ENCODE measurements at regions of chr2 and their contacts with region 1.

Region 1: GRCh38 chr2:120779781-120780283 is 44.2 kb downstream of the GLI2 start:
- H3K4me3 ChIP-seq: no peak overlapping the region
- H3K27ac ChIP-seq: no peak overlapping the region
- H3K4me1 ChIP-seq: peaks cover 11% of the 10 kb centered on the region
- CTCF ChIP-seq: no peak

Region 2: GRCh38 chr2:120735746-120736170 is 44.1 kb before region 1 on chr2 and contains the start of gene GLI2:
- CTCF ChIA-PET with region 1: interaction called, 4 read pairs
- POLR2A ChIA-PET with region 1: interaction called, 11 read pairs
- H3K4me3 ChIP-seq: peak within 1 kb of the TSS; percentile 69
- H3K27ac ChIP-seq: peak within 1 kb of the TSS; percentile 93
- H3K4me1 ChIP-seq: peaks cover 27% of the 10 kb centered on the region
- CTCF ChIP-seq: peak; percentile 70